Panc1 (cell line): ENCODE measurements at regions of chr19 and their contacts with region 1.

Region 1: DNA sequence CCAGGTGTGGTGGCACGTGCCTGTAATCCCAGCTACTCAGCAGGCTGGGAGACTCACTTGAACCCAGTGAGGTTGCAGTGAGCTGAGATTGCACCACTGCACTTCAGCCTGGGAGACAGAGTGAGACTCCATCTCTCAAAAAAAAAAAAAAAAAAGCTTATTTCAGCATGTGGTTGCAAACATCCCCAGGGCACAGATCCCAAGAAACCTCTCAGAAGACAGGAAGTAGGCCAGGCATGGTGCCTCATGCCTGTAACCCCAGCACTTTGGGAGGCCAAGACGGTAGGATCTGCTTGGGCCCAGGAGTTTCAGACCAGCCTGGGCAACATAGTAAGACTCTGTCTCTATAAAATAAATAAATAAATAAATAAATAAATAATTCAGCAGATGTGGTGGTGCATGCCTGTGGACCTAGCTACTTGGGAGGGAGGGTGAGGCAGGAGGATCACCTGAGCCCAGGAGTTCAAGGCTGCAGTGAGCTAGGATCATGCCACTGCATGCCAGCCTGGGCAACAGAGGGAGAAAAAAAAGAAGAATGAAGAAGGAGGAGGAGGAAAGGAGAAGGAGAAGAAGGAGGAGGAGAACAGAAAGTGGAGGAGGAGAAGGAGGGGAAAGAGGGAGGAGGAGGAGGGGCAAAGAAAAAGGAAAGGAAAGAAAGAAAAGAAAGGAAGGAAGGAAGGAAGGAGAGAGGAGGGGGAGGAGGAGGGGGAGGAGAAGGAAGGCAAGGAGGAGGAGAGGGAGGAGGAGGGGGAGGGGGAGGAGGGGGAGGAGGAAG is 4.3 kb upstream of the LRRC8E start:
- DNase-seq: no peak
- ATAC-seq: no peak
- H3K4me3 ChIP-seq: no peak overlapping the region
- H3K27ac ChIP-seq: no peak overlapping the region
- H3K4me1 ChIP-seq: no peaks in the 10 kb centered on the region
- H3K27me3 ChIP-seq: no peaks in the 10 kb centered on the region
- CTCF ChIP-seq: no peak

Region 2: DNA sequence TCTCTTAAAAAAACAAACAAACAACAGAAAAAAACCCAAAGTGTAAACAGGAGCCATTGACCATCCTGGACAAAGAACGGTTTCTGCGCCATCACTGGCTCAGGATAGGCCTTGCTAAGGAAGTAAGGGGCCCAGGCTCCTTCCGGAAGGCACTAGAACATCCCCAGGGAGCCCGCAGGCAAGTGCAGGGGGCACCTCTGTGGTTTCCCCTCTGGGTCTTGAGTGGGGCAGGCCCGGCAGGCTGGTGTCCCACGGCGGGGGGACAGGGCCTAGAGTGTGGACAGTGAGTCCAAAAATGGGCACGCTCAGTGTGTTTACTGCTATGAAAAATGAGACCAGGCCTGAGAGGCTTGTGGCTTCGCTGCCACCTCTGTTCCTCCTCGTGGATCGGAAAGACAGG is 1891.2 kb before region 1 on chr19:
- CTCF ChIA-PET with region 1: no interaction called
- POLR2A ChIA-PET with region 1: interaction called, 10 read pairs
- in situ Hi-C with region 1: no loop called
- intact Hi-C with region 1: no loop called
- DNase-seq: no peak
- ATAC-seq: no peak
- H3K4me3 ChIP-seq: no peak overlapping the region
- H3K27ac ChIP-seq: no peak overlapping the region
- H3K4me1 ChIP-seq: peaks cover 5% of the 10 kb centered on the region; the same call in 1 of the 2 replicates
- H3K27me3 ChIP-seq: no peaks in the 10 kb centered on the region
- CTCF ChIP-seq: no peak

Region 3: DNA sequence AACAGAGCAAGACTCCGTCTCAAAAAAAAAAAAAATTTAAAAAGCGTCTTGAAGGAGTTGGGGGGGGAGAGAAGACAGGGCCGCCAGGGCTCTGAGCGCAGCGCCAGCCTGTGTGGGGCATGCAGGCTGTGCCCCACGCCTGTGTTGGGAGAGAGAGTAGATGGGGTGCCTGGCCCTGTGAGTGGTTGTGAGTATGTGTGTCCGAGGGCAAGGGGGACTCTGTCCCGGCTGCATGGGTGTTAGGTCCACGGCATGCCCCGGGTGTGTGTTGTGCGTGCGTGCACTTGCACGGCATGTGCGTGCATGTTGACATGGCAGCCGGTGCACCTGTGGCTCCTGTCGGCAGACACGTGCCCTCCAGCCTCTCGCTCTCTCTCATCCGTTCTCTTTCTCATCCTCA is 23.1 kb after region 1 on chr19:
- CTCF ChIA-PET with region 1: no interaction called
- POLR2A ChIA-PET with region 1: interaction called, 11 read pairs
- in situ Hi-C with region 1: no loop called
- intact Hi-C with region 1: no loop called
- DNase-seq: no peak
- ATAC-seq: no peak
- H3K4me3 ChIP-seq: no peak overlapping the region
- H3K27ac ChIP-seq: no peak overlapping the region
- H3K4me1 ChIP-seq: peaks cover 6% of the 10 kb centered on the region; the same call in 1 of the 2 replicates
- H3K27me3 ChIP-seq: no peaks in the 10 kb centered on the region
- CTCF ChIP-seq: no peak